Posterior cingulate gyrus (tissue), 11 donors: ENCODE measurements at regions of chr4 and their contacts with region 1.

Region 1: GRCh38 chr4:55321707-55322264 is 24.3 kb upstream of the SRD5A3 start:
- DNase-seq: peak in 5 of 10 donors; percentile 70 to 76 (median 71)

Region 2: GRCh38 chr4:54322818-54323417 is 998.9 kb before region 1 on chr4:
- intact Hi-C with region 1: loop called (anchors 5 kb)
- DNase-seq: peak in 9 of 10 donors; percentile 31 to 93 (median 69)

Region 3: GRCh38 chr4:54971474-54971950 is 350.3 kb before region 1 on chr4:
- intact Hi-C with region 1: loop called (anchors 1 kb)
- DNase-seq: peak in 1 of 10 donors; percentile 15

Region 4: DNA sequence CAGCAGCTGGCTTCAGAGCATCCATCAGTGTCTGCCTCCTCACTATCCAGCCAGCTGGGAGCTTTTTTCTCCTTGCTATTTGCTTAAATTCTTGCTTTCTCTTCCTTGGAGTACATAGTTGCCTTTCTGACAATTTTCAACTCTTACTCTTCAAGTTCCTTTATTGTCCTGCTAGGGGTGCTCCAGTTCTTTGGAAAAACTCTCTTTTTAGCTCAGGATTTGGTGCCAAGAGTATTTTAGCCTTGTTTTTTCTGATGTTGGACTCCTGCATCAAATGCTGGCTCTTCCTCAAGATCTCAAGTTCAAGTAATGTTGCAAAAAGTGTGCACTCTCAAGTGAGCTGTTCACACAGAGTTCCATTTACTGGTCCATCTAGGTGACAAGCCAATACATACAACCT is 322.8 kb before region 1 on chr4:
- intact Hi-C with region 1: loop called (anchors 2 kb)
- DNase-seq: no peak

Region 5: GRCh38 chr4:55087009-55087929 is 234.5 kb before region 1 on chr4:
- intact Hi-C with region 1: loop called (anchors 10 kb)
- DNase-seq: peak in 1 of 10 donors; percentile 17

Region 6: DNA sequence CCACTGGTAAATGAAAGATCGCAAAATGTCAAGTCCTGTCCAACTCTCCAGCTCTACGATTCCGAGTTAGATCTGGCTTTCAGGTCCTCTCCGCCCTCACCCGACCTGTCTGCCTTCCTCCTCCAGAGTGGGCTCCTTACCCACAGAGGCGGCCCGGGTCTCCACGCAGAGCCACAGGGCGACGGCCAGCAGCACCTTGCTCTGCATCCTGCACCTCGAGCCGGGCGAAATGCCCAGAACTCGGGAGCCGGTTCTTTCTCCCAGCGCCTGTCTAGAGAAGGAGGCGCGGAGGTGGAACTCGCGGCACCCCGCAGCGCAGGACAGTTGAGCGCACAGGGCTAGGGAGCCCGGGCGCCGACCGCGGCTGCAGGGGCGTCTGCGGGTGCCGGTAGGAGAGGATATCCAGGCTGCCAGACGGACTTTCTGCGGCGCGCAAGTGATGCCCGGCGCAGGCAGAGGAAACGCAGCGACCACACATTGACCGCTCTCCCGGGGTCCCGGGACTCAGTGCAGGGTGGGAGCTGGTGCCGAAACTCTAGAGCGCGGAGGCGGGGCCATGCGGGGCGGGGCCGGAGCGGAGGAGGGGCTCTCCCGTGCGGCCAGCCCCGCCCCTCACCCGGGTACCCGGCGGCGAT is 196.6 kb before region 1 on chr4 and contains the start of gene KDR:
- intact Hi-C with region 1: no loop called
- DNase-seq: peak in 9 of 10 donors; percentile 5 to 85 (median 27)

Region 7: GRCh38 chr4:55444827-55445226 is 123.0 kb after region 1 on chr4:
- intact Hi-C with region 1: no loop called
- DNase-seq: no peak